Vagina (tissue), 2 donors: ENCODE measurements at regions of chr7 and their contacts with region 1.

Region 1: DNA sequence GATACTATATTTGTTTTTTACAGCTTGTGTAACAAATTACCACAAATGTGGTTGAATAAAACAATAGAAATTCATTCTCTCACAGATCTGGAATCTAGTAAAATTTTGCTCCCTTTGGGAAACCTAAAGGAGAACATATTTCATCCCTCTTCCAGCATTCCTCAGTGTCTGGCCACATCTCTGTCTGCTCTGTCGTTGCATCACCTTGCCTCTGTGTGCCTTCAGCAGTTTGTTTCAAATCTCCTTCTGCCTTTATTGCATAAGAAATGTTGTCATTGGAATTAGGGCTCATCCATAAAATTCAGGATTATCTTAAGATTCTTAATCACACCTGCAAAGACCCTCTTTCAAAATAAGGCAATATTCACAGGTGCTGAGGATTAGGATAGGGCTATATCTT is 14.5 kb downstream of the OR2A14 start:
- DNase-seq: no peak
- H3K4me3 ChIP-seq: no peak overlapping the region
- H3K27ac ChIP-seq: no peak overlapping the region
- H3K4me1 ChIP-seq: no peaks in the 10 kb centered on the region
- H3K27me3 ChIP-seq: no peaks in the 10 kb centered on the region
- CTCF ChIP-seq: no peak
- POLR2A ChIP-seq: no peak

Region 2: DNA sequence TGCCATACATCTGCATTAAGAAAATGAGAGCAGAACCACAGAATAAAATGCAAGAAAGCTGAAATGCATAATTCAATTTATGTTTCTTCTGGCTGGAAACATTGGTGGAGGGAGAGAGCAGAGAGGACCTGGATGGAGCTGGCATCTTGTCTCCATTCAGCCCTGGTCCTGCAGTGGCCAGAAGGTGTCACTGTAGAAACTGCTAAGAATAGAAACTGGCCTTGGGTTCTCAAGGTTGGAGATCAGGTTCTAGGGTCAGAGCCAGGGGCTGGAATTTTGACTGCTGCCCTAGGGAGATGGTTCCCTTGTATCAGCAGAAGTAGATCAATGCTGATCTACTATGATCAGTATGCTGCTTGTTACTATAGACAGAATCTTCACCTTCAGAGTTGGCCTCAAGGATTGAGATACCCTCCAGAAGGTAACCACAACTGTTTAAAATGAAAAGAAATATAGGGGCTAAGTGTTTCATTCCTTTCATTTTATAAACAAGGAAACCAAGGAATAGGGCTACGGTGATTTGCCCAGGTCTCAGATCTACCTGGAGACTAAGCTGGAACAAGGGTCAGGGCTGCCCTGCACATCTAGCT is 646.7 kb before region 1 on chr7:
- intact Hi-C with region 1: loop called (anchors 10 kb)
- DNase-seq: no peak
- H3K4me3 ChIP-seq: no peak overlapping the region
- H3K27ac ChIP-seq: no peak overlapping the region
- H3K4me1 ChIP-seq: peaks cover 13% of the 10 kb centered on the region
- H3K27me3 ChIP-seq: no peaks in the 10 kb centered on the region
- CTCF ChIP-seq: no peak
- POLR2A ChIP-seq: no peak

Region 3: DNA sequence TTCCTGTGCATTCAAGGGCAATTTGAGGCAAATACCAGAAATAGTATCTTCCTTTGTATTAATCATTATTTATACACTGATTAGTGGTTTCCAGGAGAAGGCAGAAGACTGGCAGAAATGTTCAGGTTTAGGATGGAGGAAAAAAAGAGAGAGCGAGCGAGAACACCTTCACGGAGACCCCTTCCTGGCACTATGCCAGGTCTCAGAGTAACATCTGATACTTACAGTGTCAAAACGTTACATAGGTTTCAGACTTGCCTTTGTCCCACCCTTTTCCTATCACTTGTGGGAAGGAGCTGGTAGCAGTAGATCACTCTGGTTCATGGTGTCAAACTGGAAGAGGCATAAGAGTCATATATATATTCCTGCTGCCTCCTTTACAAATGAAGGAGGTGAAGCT is 50.8 kb before region 1 on chr7:
- intact Hi-C with region 1: no loop called
- DNase-seq: no peak
- H3K4me3 ChIP-seq: no peak overlapping the region
- H3K27ac ChIP-seq: no peak overlapping the region
- H3K4me1 ChIP-seq: no peaks in the 10 kb centered on the region
- H3K27me3 ChIP-seq: no peaks in the 10 kb centered on the region
- CTCF ChIP-seq: no peak
- POLR2A ChIP-seq: no peak

Region 4: GRCh38 chr7:144437370-144438191 is 300.1 kb after region 1 on chr7:
- intact Hi-C with region 1: no loop called
- DNase-seq: no peak
- H3K4me3 ChIP-seq: no peak overlapping the region
- H3K27ac ChIP-seq: no peak overlapping the region
- H3K4me1 ChIP-seq: no peaks in the 10 kb centered on the region
- H3K27me3 ChIP-seq: no peaks in the 10 kb centered on the region
- CTCF ChIP-seq: peak in 2 of 3 experiments; percentile 5 to 58
- POLR2A ChIP-seq: no peak

Region 5: GRCh38 chr7:145106001-145106400 is 968.5 kb after region 1 on chr7:
- intact Hi-C with region 1: loop called (anchors 5 kb)
- DNase-seq: no peak
- H3K4me3 ChIP-seq: no peak overlapping the region
- H3K27ac ChIP-seq: no peak overlapping the region
- H3K4me1 ChIP-seq: no peaks in the 10 kb centered on the region
- H3K27me3 ChIP-seq: no peaks in the 10 kb centered on the region
- CTCF ChIP-seq: no peak
- POLR2A ChIP-seq: no peak